Mammary epithelial cell (primary cell): ENCODE measurements at regions of chr15 and their contacts with region 1.

Region 1: DNA sequence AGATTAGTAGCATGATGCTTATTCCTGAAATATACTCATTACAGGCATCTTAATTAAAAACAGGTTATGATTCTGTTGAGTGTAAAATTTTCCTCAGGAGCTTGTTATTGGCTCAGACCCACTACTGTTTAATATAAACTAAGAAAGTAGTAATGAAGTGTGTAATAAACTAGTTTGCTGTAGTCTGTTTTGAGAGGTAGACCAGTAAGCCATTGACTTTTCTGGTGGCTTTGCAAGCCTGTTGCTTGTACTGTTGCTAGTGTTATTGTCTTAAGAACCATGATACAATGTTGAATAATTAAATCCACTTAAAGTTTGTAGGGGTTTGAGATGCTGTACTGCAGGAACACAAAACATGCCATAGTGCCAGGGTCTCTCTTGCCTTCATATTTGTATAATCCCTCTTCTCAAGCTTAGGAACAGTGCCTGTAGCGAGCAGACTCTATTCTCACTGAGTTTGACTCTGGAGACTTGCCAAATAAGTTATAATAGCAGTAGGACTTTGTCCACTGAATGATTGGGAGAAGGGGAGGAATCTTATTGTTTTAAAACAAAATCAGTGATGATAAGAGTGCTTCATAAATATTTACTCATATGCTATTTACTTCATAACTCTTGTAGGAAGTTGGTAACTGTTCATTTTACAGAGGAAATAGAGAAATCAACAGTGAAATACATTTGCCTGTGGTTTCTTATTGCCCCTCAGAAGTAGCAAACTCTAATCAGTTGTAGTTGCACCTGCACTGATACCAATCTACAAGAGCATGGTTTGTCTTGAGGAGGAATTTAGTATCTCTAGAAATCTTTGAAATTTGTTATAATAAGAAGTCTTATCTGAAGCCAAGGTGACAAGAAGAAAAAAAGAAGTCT is 13.4 kb downstream of the TCF12 start:
- DNase-seq: no peak
- H3K4me3 ChIP-seq: no peak overlapping the region
- H3K27ac ChIP-seq: no peak overlapping the region
- H3K4me1 ChIP-seq: peaks cover 18% of the 10 kb centered on the region
- H3K27me3 ChIP-seq: no peaks in the 10 kb centered on the region
- CTCF ChIP-seq: no peak

Region 2: GRCh38 chr15:56984681-56985481 is 53.0 kb after region 1 on chr15:
- CTCF ChIA-PET with region 1: no interaction called
- dilution Hi-C with region 1: loop called (anchors 5 kb)
- in situ Hi-C with region 1: no loop called
- intact Hi-C with region 1: no loop called
- DNase-seq: no peak
- H3K4me3 ChIP-seq: no peak overlapping the region
- H3K27ac ChIP-seq: no peak overlapping the region
- H3K4me1 ChIP-seq: peaks cover 22% of the 10 kb centered on the region
- H3K27me3 ChIP-seq: no peaks in the 10 kb centered on the region
- CTCF ChIP-seq: no peak

Region 3: GRCh38 chr15:57031605-57032004 is 99.7 kb after region 1 on chr15:
- CTCF ChIA-PET with region 1: no interaction called
- dilution Hi-C with region 1: loop called (anchors 5 kb)
- in situ Hi-C with region 1: no loop called
- intact Hi-C with region 1: no loop called
- DNase-seq: no peak
- H3K4me3 ChIP-seq: no peak overlapping the region
- H3K27ac ChIP-seq: no peak overlapping the region
- H3K4me1 ChIP-seq: no peaks in the 10 kb centered on the region
- H3K27me3 ChIP-seq: no peaks in the 10 kb centered on the region
- CTCF ChIP-seq: no peak